Breast epithelium (tissue), 4 donors: ENCODE measurements at regions of chr12 and their contacts with region 1.

Region 1: DNA sequence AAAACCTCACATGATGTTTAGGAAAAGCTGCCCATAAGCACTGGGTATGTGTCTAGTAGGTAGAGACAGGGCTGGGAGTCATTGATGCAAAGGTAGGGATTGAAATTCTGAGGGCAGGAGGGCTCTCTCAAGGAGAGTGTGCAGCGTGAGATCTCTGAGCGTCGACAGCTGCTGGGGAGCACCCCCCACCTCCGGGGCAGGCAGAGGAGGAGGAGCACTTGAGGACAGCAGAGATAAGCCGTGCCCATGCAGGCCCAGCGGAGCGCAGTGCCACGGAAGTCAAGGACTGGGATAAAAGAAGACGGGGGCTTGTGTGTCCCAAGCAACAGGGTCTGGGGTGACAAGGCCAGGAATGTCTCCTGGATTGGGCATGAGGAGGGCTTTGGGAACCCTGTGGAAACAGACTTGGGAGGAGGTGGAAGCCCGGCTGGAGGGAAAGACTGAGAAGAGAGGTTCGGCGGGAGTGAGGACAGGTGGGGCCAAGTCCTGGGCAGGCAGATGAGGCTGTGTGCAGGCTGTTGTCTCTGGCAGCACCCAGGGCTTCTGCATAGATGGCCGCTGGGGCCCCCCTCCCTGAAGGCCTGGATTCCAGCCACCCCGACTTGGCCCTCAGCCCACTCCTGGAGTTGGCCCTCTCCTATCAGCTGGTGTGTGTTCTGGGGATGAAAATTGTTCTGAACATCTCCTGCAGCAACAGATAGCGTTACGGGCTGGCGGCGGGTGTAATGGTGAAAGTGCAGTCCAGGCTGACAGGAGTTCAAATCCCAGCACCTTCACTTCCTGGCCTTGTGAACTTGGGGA is 1.9 kb downstream of the CACNA2D4 start:
- DNase-seq: peak in 1 of 2 donors; percentile 7
- H3K4me3 ChIP-seq: no peak overlapping the region
- H3K27ac ChIP-seq: no peak overlapping the region
- H3K4me1 ChIP-seq: no peaks in the 10 kb centered on the region
- H3K27me3 ChIP-seq: no peaks in the 10 kb centered on the region
- CTCF ChIP-seq: no peak
- POLR2A ChIP-seq: no peak

Region 2: DNA sequence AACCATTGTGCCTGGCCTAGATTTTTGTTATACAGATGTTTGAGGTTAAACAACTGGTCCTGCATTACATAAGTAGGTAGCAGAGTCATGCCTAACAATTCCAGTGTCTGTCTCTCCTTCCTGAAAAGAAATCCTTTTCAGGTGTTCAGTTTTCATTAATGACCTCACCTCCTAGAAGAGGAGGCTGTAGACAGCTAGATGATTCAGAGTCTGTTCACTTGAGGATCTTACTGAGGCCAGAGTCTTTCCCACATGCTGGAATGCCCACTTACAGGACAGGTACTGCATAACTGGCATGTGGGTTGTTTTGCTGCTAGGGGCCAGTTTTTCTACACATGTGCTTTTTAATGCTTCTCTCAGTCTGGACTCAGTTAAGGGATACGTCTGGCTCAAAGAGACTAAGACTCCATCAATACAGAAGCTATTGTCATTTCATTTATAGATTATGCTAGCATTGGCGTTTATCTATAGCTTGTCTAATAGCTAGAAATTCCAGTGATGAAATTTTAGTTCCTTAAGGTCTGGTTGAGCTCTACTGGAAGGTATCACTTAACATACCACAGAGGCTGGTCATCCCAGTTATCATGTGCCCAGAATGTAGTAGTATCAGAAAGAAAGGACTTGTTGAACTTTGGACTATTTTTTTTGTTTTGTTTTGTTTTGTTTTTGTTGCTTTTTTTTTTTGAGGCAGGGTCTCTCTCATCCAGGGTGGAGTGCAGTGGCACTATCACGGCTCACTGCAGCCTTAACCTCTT is 719.1 kb before region 1 on chr12:
- intact Hi-C with region 1: loop called (anchors 5 kb)
- DNase-seq: no peak
- H3K4me3 ChIP-seq: no peak overlapping the region
- H3K27ac ChIP-seq: no peak overlapping the region
- H3K4me1 ChIP-seq: no peaks in the 10 kb centered on the region
- H3K27me3 ChIP-seq: no peaks in the 10 kb centered on the region
- CTCF ChIP-seq: no peak
- POLR2A ChIP-seq: no peak